ENCODE measurements at regions of chr1 and their contacts with region 1.

Region 1: GRCh38 chr1:23916209-23917131 is 3.3 kb upstream of the CNR2 start:
- DNase-seq: peak; percentile 74
- H3K4me3 Mint-ChIP-seq: no peak overlapping the region
- H3K27ac Mint-ChIP-seq: no peak overlapping the region
- H3K4me1 Mint-ChIP-seq: no peaks in the 10 kb centered on the region
- H3K27me3 Mint-ChIP-seq: no peaks in the 10 kb centered on the region
- CTCF ChIP-seq: peak; percentile 57

Region 2: GRCh38 chr1:23559136-23559984 is 357.1 kb before region 1 on chr1 and contains the start of gene ID3:
- CTCF ChIA-PET with region 1: no interaction called
- intact Hi-C with region 1: no loop called
- DNase-seq: peak; percentile 92
- H3K4me3 Mint-ChIP-seq: peak within 1 kb of the TSS; percentile 93
- H3K27ac Mint-ChIP-seq: peak within 1 kb of the TSS; percentile 88
- H3K4me1 Mint-ChIP-seq: peaks cover 64% of the 10 kb centered on the region
- H3K27me3 Mint-ChIP-seq: no peaks in the 10 kb centered on the region
- CTCF ChIP-seq: no peak
- total RNA-seq, gene ID3: 25.2 and 30.2 TPM in 2 replicates

Region 3: DNA sequence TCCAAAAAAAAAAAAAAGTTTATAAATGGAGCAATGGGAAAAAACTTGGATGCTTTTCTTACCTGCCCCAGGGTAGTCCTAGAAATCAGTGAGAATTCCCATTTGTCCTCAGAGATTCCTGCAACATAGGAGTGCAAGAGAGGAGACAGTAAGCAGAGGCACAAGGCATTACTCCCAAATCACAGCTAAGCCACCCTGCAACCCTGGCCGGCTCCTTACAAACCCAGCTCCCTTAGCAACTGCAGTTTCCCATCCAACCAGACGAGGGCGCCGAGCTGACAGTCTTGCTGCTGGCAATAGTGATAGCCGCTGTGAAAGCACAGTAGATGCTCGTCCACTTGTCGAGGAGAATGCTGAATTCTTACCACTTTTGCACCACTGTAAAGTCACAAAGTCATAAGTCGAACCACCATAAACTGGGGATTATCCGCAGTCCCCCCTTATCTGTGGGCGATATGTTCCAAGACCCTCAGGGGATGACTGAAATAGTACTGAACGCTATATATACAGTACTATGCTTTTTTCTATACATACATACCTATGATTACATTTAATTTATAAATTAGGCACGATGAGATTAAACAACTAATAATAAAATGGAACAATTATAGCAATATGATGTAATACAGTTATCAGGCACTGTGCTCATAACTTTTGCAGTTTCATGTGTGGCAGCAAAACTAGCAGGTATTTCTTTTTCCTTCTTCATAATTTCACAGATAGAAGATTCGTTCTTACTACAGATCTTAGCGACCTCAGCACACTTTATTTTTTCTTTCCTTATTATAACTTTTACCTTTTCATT is 144.2 kb before region 1 on chr1:
- CTCF ChIA-PET with region 1: interaction called, 24 read pairs
- intact Hi-C with region 1: loop called (anchors 1 kb)
- DNase-seq: peak; percentile 84
- H3K4me3 Mint-ChIP-seq: no peak overlapping the region
- H3K27ac Mint-ChIP-seq: no peak overlapping the region
- H3K4me1 Mint-ChIP-seq: peaks cover 8% of the 10 kb centered on the region
- H3K27me3 Mint-ChIP-seq: no peaks in the 10 kb centered on the region
- CTCF ChIP-seq: peak; percentile 80

Region 4: DNA sequence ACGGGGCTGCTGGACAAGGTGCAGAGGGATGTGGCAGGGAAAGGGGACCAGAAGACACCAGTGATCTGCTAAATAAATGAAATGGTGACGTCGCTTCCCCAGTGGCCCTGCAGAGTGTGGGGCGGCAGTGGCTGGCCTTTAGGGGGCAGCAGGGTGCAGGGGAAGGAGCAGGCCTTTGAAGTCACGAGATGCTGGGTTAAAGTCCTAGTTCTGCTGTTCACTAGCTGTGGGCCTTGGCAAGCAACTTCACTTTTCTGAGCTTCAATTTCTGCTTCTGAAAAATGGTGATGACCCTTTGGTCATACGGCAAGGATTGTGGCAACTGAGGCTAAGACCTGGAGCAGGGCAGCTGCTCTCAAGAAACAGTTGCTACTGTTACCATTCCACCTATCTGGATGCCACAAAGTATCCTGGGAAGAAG is 106.7 kb before region 1 on chr1:
- CTCF ChIA-PET with region 1: interaction called, 12 read pairs
- intact Hi-C with region 1: no loop called
- DNase-seq: peak; percentile 79
- H3K4me3 Mint-ChIP-seq: no peak overlapping the region
- H3K27ac Mint-ChIP-seq: no peak overlapping the region
- H3K4me1 Mint-ChIP-seq: no peaks in the 10 kb centered on the region
- H3K27me3 Mint-ChIP-seq: no peaks in the 10 kb centered on the region
- CTCF ChIP-seq: peak; percentile 70

Region 5: DNA sequence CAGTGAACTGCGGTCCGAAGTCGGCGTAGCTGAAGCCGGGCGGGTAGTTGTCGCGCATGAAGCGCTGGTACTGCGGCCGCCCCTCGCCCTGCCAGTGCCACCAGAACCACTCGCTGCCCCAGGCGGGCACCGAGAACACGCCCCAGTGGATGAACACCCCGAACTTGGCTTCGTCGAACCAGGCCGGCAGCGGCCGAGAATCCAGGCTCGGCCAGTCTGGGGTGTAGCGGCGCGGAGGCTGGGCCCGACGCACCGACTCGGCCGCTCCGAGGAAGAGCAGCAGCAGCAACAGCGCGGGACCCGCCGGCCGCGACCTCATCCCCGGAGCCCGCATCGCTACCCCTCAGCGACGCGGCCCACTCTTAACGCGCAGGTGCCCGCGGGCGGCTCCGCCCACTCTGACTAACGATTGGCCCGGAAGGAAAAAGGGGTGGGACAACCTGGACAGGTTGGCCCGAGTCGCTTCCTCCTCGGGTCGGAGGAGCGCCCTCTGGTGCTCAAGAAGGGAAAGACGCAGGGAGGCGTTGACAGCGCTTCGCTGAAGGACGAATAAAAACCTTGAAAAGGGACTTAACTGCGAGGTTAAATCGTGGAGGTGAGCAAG is 48.4 kb before region 1 on chr1 and contains the start of gene FUCA1:
- CTCF ChIA-PET with region 1: interaction called, 7 read pairs
- intact Hi-C with region 1: loop called (anchors 5 kb)
- DNase-seq: peak; percentile 92
- H3K4me3 Mint-ChIP-seq: peak within 1 kb of the TSS; percentile 89
- H3K27ac Mint-ChIP-seq: peak within 1 kb of the TSS; percentile 1
- H3K4me1 Mint-ChIP-seq: peaks cover 21% of the 10 kb centered on the region
- H3K27me3 Mint-ChIP-seq: no peaks in the 10 kb centered on the region
- CTCF ChIP-seq: peak; percentile 70
- total RNA-seq, gene FUCA1: 17.2 and 22.9 TPM in 2 replicates

Measured in Calu3 (cell line).